Heart right ventricle (tissue), 16 donors: ENCODE measurements at regions of chr19 and their contacts with region 1.

Region 1: DNA sequence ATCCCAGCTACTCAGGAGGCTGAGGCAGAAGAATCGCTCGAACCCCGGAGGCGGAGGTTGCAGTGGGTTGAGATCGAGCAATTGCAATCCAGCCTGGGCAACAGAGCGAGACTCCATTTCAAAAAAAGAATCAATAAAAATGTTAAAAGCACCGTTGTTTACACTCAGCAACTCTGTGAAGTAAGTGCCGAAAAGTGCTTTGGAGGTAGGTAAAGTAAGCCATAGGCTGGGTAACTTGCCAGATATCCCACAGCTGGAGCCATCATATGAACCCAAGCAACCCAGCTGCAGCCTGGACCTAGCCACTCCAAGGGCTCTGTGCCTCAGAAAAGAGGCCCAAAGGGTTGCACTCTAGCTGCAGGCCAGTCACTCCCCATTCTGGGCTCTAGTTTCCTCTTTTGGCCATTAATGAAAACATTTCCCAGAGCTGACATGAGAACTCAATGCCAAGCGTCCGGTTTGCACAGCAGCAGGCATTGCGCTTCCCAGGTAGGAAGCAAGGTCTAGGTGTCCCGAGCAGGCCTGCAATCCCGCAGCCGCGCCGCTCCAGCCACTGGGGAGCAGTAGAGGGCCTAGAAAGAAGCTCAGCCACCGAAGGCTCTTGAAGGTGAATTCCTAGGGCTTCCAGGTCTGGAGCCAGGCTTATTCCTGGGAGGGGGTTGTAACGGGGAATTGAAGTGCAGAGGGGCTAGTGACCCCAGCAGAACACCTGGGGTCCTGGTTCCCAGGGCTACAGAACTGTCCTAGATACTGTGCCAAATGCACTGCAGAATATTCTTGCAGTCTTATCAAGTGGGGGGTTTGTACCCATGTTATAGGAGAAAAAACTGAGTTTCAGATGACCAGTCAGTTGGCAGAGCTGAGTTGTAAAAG is 4.1 kb upstream of the CD79A start:
- DNase-seq: peak; percentile 47 to 61
- ATAC-seq: peak; percentile 46 to 75 (median 67)
- H3K4me3 ChIP-seq: no peak overlapping the region
- H3K27ac ChIP-seq: peak overlapping the region in 4 of 10 donors; percentile 1 to 78 (median 38)
- H3K4me1 ChIP-seq: peaks cover 0 to 96% (median 37%) of the 10 kb centered on the region in 9 donors
- H3K27me3 ChIP-seq: no peaks in the 10 kb centered on the region
- CTCF ChIP-seq: peak; percentile 29 to 77 (median 71)

Region 2: GRCh38 chr19:41934849-41935374 is 61.9 kb after region 1 on chr19:
- intact Hi-C with region 1: loop called in 7 of 10 experiments (anchors 1 to 10 kb)
- DNase-seq: peak; percentile 63 to 76
- ATAC-seq: peak; percentile 48 to 85 (median 74)
- H3K4me3 ChIP-seq: no peak overlapping the region
- H3K27ac ChIP-seq: no peak overlapping the region
- H3K4me1 ChIP-seq: peaks cover 0 to 9% (median 2%) of the 10 kb centered on the region in 9 donors
- H3K27me3 ChIP-seq: peaks cover 13 to 84% (median 74%) of the 10 kb centered on the region in 7 donors
- CTCF ChIP-seq: peak; percentile 70 to 87 (median 81)

Region 3: GRCh38 chr19:41945135-41945766 is 72.2 kb after region 1 on chr19:
- intact Hi-C with region 1: loop called in 4 of 10 experiments (anchors 2 to 5 kb)
- DNase-seq: no peak
- ATAC-seq: peak in 1 of 8 donors; percentile 43
- H3K4me3 ChIP-seq: no peak overlapping the region
- H3K27ac ChIP-seq: peak overlapping the region in 1 of 10 donors; percentile 40
- H3K4me1 ChIP-seq: peaks cover 0 to 13% (median 7%) of the 10 kb centered on the region in 9 donors
- H3K27me3 ChIP-seq: peaks cover 0 to 22% (median 18%) of the 10 kb centered on the region in 7 donors
- CTCF ChIP-seq: no peak

Region 4: GRCh38 chr19:41951686-41952172 is 78.7 kb after region 1 on chr19:
- intact Hi-C with region 1: loop called in 7 of 10 experiments (anchors 2 to 5 kb)
- DNase-seq: peak; percentile 71 to 82
- ATAC-seq: peak; percentile 58 to 82 (median 72)
- H3K4me3 ChIP-seq: no peak overlapping the region
- H3K27ac ChIP-seq: no peak overlapping the region
- H3K4me1 ChIP-seq: peaks cover 0 to 14% (median 3%) of the 10 kb centered on the region in 9 donors
- H3K27me3 ChIP-seq: no peaks in the 10 kb centered on the region
- CTCF ChIP-seq: peak; percentile 93 to 100 (median 98)

Region 5: DNA sequence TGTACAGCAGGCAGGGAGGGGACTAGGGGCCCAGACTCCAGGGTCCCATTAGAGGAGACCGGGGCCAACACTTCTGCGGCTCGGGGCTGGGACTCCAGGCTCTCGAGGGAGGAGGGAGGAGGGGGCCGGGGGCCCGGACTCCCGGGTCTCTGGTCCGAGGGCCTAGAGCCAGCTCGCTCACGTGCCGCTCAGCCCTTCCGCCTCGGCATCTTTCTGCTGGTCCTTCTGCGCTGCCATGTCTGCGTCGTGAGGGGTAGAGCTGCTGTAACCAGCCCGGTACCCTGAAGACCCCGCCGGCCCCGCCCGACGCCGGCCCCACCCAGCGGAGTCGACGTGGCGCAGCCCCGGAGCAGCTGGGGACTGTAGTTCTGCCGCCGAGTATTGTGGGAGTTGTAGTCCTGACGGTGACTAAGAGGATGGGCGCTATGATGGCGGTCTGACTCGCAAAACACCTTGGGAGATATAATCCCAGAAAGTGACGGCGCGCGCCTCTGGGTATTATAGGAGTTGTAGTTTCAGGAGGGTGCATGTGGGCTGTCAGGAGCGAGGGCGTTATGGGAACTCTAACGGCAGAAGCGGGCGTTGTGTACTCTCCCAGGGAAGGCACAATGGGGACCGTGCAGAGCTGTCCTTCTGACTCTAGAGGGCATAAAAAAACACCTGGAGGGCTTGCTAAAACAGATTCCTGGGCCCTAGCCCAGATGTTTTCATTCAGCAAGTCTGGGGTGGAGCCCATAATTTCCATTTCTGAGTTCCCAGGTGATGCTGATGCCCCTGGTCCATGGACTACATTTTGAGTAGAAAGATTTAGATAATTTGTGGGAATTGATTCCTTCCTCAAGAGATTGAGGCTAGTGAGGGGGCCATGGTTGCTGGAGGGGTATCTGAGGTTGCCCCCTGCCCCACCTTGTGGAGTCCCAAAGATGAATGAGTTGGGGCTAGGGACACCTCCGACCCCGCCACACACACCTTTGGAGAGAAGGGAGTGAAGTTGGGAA is 86.3 kb after region 1 on chr19 and contains the start of gene RABAC1:
- intact Hi-C with region 1: loop called in 4 of 10 experiments (anchors 5 kb)
- DNase-seq: peak; percentile 88 to 93
- ATAC-seq: peak; percentile 89 to 95 (median 94)
- H3K4me3 ChIP-seq: peak within 1 kb of the TSS; percentile 57 to 100 (median 96)
- H3K27ac ChIP-seq: peak within 1 kb of the TSS; percentile 66 to 94 (median 89)
- H3K4me1 ChIP-seq: peaks cover 6 to 34% (median 21%) of the 10 kb centered on the region in 9 donors
- H3K27me3 ChIP-seq: no peaks in the 10 kb centered on the region
- CTCF ChIP-seq: peak in 3 of 9 donors; percentile 8 to 30 (median 22)
- total RNA-seq, gene RABAC1: 34.5 to 117 (median 46.9) TPM